Left cardiac atrium (tissue), 4 donors: ENCODE measurements at regions of chr11 and their contacts with region 1.

Region 1: GRCh38 chr11:113730887-113731726 is 25.0 kb upstream of the TMPRSS5 start:
- DNase-seq: no peak
- ATAC-seq: peak; percentile 72 to 92

Region 2: GRCh38 chr11:113305440-113306336 is 425.4 kb before region 1 on chr11:
- intact Hi-C with region 1: loop called (anchors 2 to 10 kb)
- DNase-seq: peak; percentile 83
- ATAC-seq: peak; percentile 92 to 95

Region 3: DNA sequence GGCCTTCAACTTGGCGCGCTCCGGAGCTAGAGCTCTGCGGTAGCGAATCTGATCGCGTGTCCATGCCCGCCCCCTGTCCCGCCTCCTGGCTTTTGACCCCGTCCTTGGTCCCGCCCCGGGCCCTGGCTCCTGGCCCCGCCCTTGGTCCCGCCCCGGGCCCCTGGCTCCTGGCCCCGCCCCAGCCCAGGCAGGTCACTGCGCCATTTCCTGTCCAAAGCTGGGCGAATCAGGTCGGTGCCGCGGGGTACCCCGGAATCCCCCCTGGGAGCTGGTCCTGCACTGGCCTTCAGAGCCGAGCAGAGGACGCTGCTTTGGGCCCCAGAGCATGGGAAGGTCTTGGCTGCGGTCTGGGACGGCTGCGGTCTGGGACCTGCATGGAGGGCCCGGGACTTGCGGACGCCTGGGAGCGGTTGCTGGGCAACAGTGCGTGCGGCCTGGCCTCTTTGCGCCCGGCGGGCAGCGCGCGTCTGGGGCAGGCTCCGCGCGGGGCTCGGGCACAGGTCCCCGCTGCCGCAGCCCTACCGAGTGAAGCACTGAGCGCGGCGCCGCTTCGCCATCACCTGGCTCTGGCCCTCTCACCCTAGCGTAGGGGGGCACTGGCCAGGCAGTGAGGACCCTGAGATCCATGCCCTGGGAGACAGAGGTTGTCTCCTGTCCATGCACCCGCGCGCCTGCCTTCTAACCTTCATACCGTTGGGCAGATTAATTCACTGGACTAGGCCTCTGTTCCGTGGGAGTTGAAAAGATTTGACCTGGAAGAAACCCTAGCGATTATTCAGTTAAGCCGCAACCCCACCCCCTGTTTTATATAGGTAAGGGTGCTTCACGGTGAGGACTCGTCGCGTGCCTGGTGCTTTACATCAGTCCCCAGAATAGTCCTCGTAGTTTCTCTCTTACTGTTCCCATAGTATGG is 416.5 kb before region 1 on chr11 and contains the start of gene TTC12:
- intact Hi-C with region 1: loop called in 1 of 2 experiments (anchors 10 kb)
- DNase-seq: peak; percentile 94
- ATAC-seq: peak; percentile 100
- total RNA-seq, gene TTC12: 4.2 to 5.4 TPM

Region 4: GRCh38 chr11:113457784-113458183 is 273.3 kb before region 1 on chr11:
- intact Hi-C with region 1: no loop called
- DNase-seq: no peak
- ATAC-seq: no peak

Region 5: DNA sequence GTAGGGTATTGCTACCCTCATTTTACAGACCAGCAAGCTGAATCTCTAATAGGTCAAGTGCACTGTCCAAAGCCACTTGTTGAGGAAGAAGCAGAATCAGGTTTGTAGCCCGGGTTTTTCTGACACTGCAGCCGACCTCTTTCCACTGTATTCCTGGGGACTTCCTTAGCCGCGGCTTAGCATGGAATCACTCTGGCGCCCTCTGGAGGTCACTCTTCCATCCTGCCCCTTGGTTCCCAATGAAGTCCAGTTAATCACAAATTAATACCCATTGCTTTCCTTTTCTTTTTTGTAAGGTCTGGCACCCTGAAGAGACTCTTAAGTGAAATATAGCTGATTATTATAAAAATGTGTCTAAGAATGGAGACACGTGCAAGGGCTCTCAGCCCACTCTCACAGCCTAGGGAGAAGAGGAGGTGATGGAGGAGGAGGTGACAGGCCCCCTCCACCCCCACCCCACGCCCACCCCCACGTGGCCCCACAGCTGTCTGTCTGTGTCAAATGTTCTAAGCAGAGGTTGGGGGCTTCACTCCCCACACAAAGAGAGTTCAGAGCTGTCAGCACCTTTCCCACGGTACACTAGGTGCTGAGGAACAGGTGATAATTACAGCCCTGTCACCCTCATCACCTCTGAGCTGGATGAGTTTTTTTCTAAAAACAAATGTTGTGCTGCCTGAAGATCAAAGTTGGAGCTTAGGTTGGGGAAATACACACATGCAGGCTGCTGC is 198.2 kb before region 1 on chr11:
- intact Hi-C with region 1: loop called in 1 of 2 experiments (anchors 10 kb)
- DNase-seq: peak; percentile 80
- ATAC-seq: peak; percentile 81 to 86

Region 6: GRCh38 chr11:113647108-113647507 is 84.0 kb before region 1 on chr11:
- intact Hi-C with region 1: no loop called
- DNase-seq: no peak
- ATAC-seq: no peak

Region 7: DNA sequence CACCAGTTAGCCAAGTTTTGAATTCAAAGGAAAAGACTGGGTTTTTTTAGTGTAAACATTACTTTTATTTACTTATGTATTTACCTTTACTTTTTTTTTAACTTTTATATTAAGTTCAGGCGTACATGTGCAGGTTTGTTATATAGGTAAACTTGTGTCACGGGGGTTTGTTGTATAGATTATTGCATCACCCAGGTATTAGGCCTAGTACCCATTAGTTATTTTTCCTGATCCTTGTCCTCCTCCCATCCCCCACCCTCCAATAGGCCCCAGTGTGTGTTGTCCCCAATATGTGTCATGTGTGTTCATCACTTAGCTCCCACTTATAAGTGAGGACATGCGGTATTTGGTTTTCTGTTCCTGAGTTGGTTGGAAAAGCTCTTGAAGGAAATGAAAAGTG is 21.8 kb after region 1 on chr11:
- intact Hi-C with region 1: no loop called
- DNase-seq: no peak
- ATAC-seq: no peak